ENCODE measurements at regions of chr17 and their contacts with region 1.

Region 1: GRCh38 chr17:39621523-39622379 is 5.0 kb upstream of the PPP1R1B start:
- DNase-seq: peak; percentile 89
- H3K4me3 Mint-ChIP-seq: peak overlapping the region; percentile 55
- H3K27ac Mint-ChIP-seq: no peak overlapping the region
- H3K4me1 Mint-ChIP-seq: peaks cover 26% of the 10 kb centered on the region
- H3K27me3 Mint-ChIP-seq: peaks cover 91% of the 10 kb centered on the region

Region 2: DNA sequence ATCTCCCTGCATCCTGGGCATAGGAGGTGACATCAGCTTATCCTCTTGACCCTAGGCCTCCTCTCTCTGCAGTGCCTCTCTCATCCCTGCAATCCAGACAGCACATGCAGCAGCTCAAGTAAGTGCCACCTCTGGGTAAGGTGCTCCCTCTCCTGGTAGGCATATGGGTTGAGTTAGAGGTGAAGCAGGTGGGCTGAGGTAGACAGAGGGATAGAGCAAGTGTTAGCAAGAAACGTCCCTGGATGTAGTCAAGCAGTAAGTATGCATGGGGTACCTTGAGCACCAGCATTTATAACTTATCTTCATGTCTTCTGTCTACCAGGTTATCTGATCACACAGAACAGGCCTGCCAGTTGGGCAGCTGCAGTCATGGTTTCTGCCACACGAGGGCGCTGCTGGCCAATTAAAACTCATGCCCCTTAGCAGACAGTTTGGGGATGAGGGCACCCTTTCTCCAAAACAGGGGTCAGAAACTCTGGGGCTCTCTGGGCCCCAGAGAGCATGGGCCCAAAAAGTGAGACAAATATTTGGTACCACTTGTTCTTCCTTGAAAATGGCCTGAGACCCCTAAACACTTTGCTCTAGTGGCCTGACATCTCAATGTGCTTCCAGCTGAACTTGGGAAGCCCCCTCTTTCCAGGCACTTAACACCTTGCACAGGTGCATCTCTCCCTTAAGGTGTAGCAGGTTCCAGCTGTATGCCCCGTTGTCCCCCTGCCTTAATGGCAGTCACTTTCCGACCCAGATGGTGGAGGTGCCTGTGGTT is 73.9 kb before region 1 on chr17:
- CTCF ChIA-PET with region 1: interaction called, 51 read pairs
- DNase-seq: peak; percentile 85
- H3K4me3 Mint-ChIP-seq: no peak overlapping the region
- H3K27ac Mint-ChIP-seq: peak overlapping the region; percentile 59
- H3K4me1 Mint-ChIP-seq: no peaks in the 10 kb centered on the region
- H3K27me3 Mint-ChIP-seq: no peaks in the 10 kb centered on the region

Region 3: DNA sequence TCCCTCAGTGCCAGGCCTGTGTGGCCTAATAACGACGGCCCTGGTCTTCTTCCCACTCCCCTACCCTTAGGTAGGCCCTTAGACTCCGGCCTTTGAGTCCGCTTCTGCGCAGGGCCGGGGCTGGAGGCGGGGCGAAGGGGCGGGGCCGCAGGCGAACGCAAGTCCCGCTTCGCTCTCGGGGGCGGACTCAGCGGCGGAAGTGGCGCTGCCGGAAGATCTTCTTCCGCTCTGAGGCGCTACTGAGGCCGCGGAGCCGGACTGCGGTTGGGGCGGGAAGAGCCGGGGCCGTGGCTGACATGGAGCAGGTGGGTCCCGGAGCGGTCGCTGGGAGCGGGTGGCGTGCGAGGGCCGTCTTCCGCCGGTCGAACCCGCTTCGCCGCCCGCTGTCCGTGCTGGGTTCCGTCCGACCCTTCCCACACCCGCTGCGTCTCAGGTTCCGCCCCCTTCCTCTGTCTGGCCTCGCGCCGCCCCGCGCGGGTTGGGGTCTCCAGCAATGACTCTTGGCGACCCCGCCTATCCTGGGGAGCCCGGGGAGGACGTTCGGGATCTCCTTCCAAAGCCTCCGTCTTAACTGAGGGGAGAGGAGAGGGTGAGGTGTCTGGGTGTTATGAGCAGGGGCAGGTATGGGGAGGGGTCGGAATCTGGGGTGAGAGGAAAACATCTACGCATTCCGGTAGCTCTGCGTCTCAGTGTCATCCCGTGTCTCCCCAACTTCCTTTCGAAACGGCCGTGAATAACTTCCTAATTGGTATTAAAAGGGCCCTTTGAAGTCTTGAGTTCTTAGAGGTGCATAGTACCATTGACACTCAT is 15.4 kb after region 1 on chr17 and contains the start of gene STARD3:
- CTCF ChIA-PET with region 1: interaction called, 200 read pairs
- DNase-seq: peak; percentile 96
- H3K4me3 Mint-ChIP-seq: peak within 1 kb of the TSS; percentile 83
- H3K27ac Mint-ChIP-seq: peak within 1 kb of the TSS; percentile 77
- H3K4me1 Mint-ChIP-seq: peaks cover 52% of the 10 kb centered on the region
- H3K27me3 Mint-ChIP-seq: peaks cover 20% of the 10 kb centered on the region

Region 4: DNA sequence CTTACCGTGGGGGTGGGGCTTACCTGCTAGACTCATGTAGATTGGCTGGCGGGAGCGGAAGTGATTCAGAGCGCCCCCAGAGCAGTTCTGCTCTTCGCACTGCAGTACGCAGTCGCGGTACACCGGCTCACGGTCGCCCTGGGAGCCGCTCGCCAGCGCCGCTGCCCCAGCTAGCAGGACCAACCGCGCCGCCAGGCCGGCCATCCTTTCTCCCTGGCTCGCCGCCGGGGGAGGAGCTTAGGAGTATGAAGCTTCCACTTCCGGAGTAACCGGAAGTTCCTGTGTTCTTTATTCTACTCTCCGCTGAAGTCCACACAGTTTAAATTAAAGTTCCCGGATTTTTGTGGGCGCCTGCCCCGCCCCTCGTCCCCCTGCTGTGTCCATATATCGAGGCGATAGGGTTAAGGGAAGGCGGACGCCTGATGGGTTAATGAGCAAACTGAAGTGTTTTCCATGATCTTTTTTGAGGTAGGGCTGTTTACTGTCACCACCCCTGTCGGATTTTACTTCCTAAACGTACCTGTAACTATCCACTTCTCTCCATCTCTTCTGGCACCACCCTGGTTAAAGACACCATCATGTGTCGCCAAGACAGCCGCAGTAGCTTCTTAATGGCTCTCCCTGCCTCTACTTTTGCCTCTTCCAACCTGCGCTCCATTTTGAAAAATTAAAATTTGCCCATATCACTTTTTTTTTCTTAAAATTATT is 66.2 kb after region 1 on chr17 and contains the start of gene PGAP3:
- CTCF ChIA-PET with region 1: interaction called, 12 read pairs
- DNase-seq: peak; percentile 85
- H3K4me3 Mint-ChIP-seq: peak within 1 kb of the TSS; percentile 95
- H3K27ac Mint-ChIP-seq: peak within 1 kb of the TSS; percentile 96
- H3K4me1 Mint-ChIP-seq: peaks cover 31% of the 10 kb centered on the region
- H3K27me3 Mint-ChIP-seq: no peaks in the 10 kb centered on the region

Region 5: GRCh38 chr17:39754161-39754951 is 132.6 kb after region 1 on chr17:
- CTCF ChIA-PET with region 1: interaction called, 20 read pairs
- DNase-seq: peak; percentile 97
- H3K4me3 Mint-ChIP-seq: peak overlapping the region; percentile 79
- H3K27ac Mint-ChIP-seq: peak overlapping the region; percentile 85
- H3K4me1 Mint-ChIP-seq: peaks cover 62% of the 10 kb centered on the region
- H3K27me3 Mint-ChIP-seq: peaks cover 16% of the 10 kb centered on the region

Region 6: DNA sequence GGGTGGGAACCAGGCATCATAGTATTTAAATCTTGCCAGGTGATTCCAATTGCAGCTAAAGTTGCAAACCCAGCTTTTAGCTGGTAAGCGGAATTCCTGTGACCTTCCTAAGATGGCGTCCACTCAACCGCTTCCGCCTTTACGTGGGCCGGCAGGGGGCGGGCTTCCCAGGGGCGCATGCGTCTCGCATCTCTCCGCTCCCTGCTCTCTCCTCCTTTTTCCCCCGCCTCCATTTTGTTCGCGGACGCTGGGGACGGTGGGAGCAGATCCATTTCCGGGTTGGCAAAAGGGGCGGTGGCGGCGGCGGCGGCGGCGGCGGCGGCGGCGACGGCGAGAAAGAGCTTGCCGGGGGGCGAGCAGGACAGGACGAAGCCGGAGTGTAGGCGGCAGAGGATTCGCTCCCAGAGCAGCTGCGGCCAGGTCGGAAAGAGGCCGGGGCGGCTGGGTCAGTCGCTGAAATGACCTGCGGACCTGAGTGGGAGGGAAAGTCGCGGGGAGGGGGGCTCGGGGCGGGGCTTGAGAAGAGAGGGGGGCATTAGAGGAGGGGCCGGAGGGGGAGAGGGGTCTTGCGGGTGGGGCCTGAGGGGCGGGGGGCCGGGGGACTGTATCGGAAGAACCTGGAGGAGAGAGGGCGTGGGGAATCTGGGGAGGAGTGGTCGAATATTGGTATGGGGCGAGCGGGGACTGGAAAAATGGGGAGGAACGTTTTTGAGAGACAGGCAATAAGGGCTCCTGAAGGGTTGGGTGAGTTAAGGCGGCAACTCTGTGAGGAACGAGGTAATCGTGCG is 597.5 kb after region 1 on chr17 and contains the start of gene WIPF2:
- CTCF ChIA-PET with region 1: no interaction called
- DNase-seq: peak; percentile 98
- H3K4me3 Mint-ChIP-seq: peak within 1 kb of the TSS; percentile 78
- H3K27ac Mint-ChIP-seq: peak within 1 kb of the TSS; percentile 99
- H3K4me1 Mint-ChIP-seq: peaks cover 34% of the 10 kb centered on the region
- H3K27me3 Mint-ChIP-seq: no peaks in the 10 kb centered on the region